ENCODE measurements at regions of chr11 and their contacts with region 1.

Region 1: GRCh38 chr11:19060629-19061028 is at the start of gene MRGPRX2:
- DNase-seq: no peak
- ATAC-seq: peak; percentile 61
- H3K4me3 Mint-ChIP-seq: no peak within 1 kb of the TSS
- H3K27ac Mint-ChIP-seq: no peak within 1 kb of the TSS
- H3K4me1 Mint-ChIP-seq: peaks cover 22% of the 10 kb centered on the region
- H3K27me3 Mint-ChIP-seq: peaks cover 36% of the 10 kb centered on the region
- total RNA-seq, gene MRGPRX2: not detected

Region 2: GRCh38 chr11:19040051-19040450 is 20.6 kb before region 1 on chr11:
- CTCF ChIA-PET with region 1: no interaction called
- DNase-seq: no peak
- ATAC-seq: no peak
- H3K4me3 Mint-ChIP-seq: no peak overlapping the region
- H3K27ac Mint-ChIP-seq: no peak overlapping the region
- H3K4me1 Mint-ChIP-seq: no peaks in the 10 kb centered on the region
- H3K27me3 Mint-ChIP-seq: peaks cover 21% of the 10 kb centered on the region

Region 3: DNA sequence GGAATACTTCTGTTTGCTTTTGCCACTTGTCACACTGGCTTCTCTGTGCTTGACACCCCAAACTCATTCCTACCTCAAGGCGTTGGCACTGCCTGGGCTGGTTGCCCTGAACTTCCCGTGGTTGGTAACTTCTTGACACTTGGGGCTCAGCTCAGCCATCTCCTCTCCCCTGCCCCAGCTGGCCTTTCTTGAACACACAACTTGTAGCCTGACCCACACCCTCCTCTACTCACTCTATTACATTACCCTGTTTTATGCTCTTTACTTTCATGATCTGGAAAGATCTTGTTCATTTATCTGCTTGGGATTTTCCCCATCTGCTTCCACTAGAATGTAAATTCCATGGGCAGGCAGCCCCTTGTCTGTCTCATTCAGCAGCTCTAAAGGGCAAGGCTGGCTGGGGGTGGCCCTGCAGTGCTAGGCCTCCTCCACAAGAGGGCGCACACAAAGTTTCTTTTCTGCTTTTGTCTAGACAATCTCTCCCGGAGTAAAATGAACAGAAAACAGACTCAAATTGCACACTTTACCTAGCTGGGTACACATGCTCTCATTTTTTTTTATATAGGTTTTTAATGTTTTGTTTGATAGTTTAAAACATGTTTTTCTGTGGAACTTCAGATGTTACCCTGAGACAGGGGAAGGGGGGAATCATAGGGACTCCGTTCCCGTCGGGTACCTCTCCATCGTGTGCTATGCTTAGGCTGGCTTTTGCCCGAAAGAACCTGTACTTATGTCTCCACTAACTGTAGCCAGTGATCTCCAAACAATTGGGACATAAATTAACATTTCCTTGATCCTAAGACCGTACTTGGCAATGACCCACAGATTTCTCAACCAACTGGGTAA is 16.3 kb after region 1 on chr11:
- CTCF ChIA-PET with region 1: interaction called, 16 read pairs
- DNase-seq: peak; percentile 66
- ATAC-seq: peak; percentile 53
- H3K4me3 Mint-ChIP-seq: no peak overlapping the region
- H3K27ac Mint-ChIP-seq: no peak overlapping the region
- H3K4me1 Mint-ChIP-seq: no peaks in the 10 kb centered on the region
- H3K27me3 Mint-ChIP-seq: peaks cover 20% of the 10 kb centered on the region

Measured in activated CD8-positive, alpha-beta memory T cell treated with anti-CD3 and anti-CD28 coated beads, Interleukin-2, amount 10 ng/mL, durations not matched to agents 7 days and 5 days (primary cell).